Adrenal gland (tissue), 19 donors: ENCODE measurements at regions of chr15 and their contacts with region 1.

Region 1: DNA sequence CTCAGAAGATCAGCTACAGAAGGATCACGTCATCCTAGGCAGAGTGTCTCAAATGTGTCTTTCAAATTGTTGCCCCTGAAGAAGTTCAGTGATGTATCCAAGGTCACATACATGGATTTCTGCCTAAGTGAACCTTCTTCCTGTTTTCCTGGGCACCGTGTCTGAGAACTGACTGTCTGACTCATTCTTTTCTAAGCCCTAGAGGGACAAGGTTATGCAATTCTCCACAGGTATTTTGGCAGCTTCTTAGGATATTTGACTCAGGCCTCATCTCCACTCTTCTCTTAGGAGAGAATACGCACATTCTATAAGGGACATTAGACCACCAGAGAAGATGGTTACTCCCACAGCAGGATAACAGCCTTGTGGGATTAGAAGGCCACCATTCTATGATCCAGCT is 392.0 kb upstream of the THBS1 start:
- DNase-seq: no peak
- H3K4me3 ChIP-seq: no peak overlapping the region
- H3K27ac ChIP-seq: no peak overlapping the region
- H3K4me1 ChIP-seq: no peaks in the 10 kb centered on the region
- H3K27me3 ChIP-seq: no peaks in the 10 kb centered on the region
- CTCF ChIP-seq: no peak
- POLR2A ChIP-seq: no peak

Region 2: GRCh38 chr15:39110336-39110735 is 78.6 kb before region 1 on chr15:
- intact Hi-C with region 1: no loop called
- DNase-seq: no peak
- H3K4me3 ChIP-seq: no peak overlapping the region
- H3K27ac ChIP-seq: no peak overlapping the region
- H3K4me1 ChIP-seq: no peaks in the 10 kb centered on the region
- H3K27me3 ChIP-seq: peaks cover 5% of the 10 kb centered on the region
- CTCF ChIP-seq: no peak
- POLR2A ChIP-seq: no peak

Region 3: GRCh38 chr15:39145854-39146625 is 42.9 kb before region 1 on chr15:
- intact Hi-C with region 1: no loop called
- DNase-seq: no peak
- H3K4me3 ChIP-seq: no peak overlapping the region
- H3K27ac ChIP-seq: no peak overlapping the region
- H3K4me1 ChIP-seq: peaks cover 13 to 18% of the 10 kb centered on the region in 2 donors
- H3K27me3 ChIP-seq: no peaks in the 10 kb centered on the region
- CTCF ChIP-seq: no peak
- POLR2A ChIP-seq: no peak

Region 4: GRCh38 chr15:39358441-39359041 is 169.6 kb after region 1 on chr15:
- intact Hi-C with region 1: no loop called
- DNase-seq: peak in 6 of 7 donors; percentile 33 to 66 (median 38)
- H3K4me3 ChIP-seq: no peak overlapping the region
- H3K27ac ChIP-seq: peak overlapping the region in 2 of 5 donors; percentile 38 to 78
- H3K4me1 ChIP-seq: peaks cover 0 to 17% of the 10 kb centered on the region in 2 donors
- H3K27me3 ChIP-seq: no peaks in the 10 kb centered on the region
- CTCF ChIP-seq: no peak
- POLR2A ChIP-seq: no peak

Region 5: DNA sequence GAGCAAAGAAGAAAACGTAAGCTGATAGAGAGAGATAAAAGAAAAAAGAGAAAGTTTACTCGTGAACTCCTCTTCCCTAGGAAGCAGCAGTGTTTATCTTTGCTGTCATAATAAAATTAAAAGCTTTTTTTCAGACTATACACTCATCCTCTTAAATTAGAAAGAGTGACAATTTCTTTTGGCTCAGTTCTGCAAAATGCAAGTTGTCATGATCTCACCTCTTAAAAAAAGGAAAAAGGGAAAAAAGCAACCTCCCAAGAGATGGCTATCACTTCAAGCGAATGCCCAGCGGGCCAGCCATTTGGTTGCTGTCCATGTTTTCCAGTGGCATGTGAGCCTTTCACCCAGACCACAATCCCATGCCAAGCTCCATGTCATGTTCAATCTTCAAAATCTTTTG is 384.9 kb after region 1 on chr15:
- intact Hi-C with region 1: no loop called
- DNase-seq: no peak
- H3K4me3 ChIP-seq: no peak overlapping the region
- H3K27ac ChIP-seq: no peak overlapping the region
- H3K4me1 ChIP-seq: peaks cover 0 to under 1% of the 10 kb centered on the region in 2 donors
- H3K27me3 ChIP-seq: peaks cover 5% of the 10 kb centered on the region
- CTCF ChIP-seq: no peak
- POLR2A ChIP-seq: no peak

Region 6: GRCh38 chr15:39586387-39587171 is 397.7 kb after region 1 on chr15:
- intact Hi-C with region 1: loop called in 1 of 2 experiments (anchors 5 kb)
- DNase-seq: no peak
- H3K4me3 ChIP-seq: no peak overlapping the region
- H3K27ac ChIP-seq: peak overlapping the region in 1 of 5 donors; percentile 2
- H3K4me1 ChIP-seq: no peaks in the 10 kb centered on the region
- H3K27me3 ChIP-seq: no peaks in the 10 kb centered on the region
- CTCF ChIP-seq: no peak
- POLR2A ChIP-seq: peak in 1 of 2 donors; percentile 33